Gastrocnemius medialis (tissue), 4 donors: ENCODE measurements at regions of chr10 and their contacts with region 1.

Region 1: DNA sequence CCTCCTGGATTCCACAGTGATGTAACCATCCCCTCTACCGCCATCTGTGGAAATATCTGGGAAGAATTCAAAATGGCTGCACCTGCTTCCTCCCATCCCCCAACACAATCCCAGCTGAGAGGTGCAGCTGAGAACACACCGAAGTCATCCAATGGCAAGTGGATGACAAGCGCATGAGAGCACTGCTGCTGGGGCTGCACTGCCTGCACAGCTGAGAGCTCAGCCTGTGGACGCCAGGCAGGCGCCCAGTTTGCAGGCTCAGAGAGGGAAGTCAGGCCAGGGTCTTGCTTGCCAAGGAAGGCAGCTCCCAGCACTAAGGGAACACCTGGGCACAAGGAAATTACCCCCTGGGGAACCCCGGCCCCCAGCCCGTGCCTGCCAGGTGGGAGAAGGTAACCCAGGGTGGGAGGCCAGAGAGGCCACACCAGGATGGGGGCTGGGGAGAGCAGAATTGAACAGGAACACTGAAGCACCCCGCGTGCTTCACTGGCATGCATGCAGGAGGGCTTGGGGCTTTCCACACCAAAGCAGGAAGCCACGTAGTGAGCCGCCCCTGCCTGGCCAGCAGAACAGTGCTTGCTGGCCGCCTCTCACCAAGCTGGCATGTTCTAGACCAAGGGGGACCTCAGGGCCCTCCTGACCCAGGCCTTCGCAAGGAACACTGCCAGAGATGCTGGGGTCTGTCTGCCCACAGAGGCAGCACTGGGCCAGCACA is 46.2 kb downstream of the FAM53B start:
- DNase-seq: no peak
- ATAC-seq: peak in 1 of 2 donors; percentile 10
- H3K4me3 ChIP-seq: no peak overlapping the region
- H3K27ac ChIP-seq: peak overlapping the region; percentile 93 to 98 (median 96)
- H3K4me1 ChIP-seq: peaks cover 79 to 97% of the 10 kb centered on the region in 2 donors
- H3K27me3 ChIP-seq: no peaks in the 10 kb centered on the region
- CTCF ChIP-seq: no peak
- POLR2A ChIP-seq: peak in 1 of 2 donors; percentile 26

Region 2: DNA sequence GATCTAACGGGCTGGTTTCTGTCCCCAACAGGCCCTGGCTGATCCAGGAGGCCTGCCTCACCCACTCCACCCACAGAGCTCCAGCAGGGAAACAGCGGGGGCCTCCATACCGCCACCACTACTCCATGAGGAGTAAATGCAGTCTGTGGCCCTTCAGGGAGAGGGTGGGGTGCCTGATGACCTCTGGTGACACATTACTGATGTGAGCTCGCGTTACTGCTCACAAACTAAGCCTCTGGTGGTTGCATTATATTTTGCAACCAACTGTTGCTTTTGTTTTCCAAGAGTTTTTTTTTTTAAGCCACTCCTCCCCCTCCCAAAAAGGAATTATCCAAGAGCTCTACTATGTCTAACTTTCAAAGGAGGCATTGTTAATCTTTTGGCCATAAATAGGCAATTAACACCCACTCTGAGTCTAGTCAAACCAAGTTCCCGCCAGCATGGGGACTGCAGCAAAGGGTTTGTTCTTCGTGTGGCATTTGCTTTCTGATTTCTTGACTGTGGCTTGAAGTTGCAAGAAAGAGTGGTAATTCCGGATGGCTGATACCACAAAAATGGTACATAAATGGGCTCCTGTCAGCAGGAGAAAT is 26.4 kb before region 1 on chr10:
- in situ Hi-C with region 1: no loop called
- intact Hi-C with region 1: no loop called
- DNase-seq: peak in 1 of 2 donors; percentile 87
- ATAC-seq: peak; percentile 42 to 76
- H3K4me3 ChIP-seq: no peak overlapping the region
- H3K27ac ChIP-seq: peak overlapping the region; percentile 55 to 97 (median 74)
- H3K4me1 ChIP-seq: peaks cover 90 to 91% of the 10 kb centered on the region in 2 donors
- H3K27me3 ChIP-seq: no peaks in the 10 kb centered on the region
- CTCF ChIP-seq: peak in 3 of 5 experiments; percentile 32 to 63 (median 51)
- POLR2A ChIP-seq: peak in 1 of 2 donors; percentile 13

Region 3: DNA sequence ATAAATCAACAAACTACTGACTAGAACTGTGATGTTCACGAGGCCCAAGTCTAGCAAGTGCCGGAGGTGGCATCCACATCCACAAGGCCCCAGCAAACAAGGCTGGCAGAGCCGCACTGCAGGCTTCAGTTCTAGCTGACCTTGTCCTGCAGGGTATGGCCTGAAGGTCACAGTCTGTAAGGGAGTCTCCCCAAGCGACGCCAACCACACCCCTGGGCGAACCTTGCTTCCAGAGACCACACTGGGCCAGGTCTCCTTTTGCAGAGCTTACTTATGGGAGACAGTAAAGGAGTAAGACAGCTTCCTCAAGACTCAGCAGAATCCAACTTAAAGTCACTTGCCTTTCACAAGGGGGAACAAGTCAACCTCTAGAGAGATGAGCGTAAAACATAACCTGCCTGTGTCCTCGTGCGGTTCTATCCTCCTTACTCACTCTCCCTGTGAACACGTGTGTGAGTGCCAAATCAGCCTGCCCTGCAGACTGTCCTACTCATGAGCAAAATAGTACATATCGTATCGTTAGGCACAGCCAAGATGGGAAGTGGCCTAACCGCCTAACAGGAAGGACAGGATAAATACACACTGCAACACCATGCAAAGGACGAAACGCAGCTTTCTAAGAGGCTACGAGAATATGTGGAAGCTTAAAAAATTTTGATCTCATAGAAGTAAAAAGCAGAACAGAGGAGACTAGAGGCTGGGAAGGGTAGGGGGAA is 23.5 kb after region 1 on chr10:
- in situ Hi-C with region 1: no loop called
- intact Hi-C with region 1: loop called (anchors 2 kb)
- DNase-seq: peak; percentile 93 to 94
- ATAC-seq: peak; percentile 85 to 87
- H3K4me3 ChIP-seq: no peak overlapping the region
- H3K27ac ChIP-seq: peak overlapping the region; percentile 92 to 97 (median 92)
- H3K4me1 ChIP-seq: peaks cover 97% of the 10 kb centered on the region in 2 donors
- H3K27me3 ChIP-seq: no peaks in the 10 kb centered on the region
- CTCF ChIP-seq: no peak
- POLR2A ChIP-seq: peak; percentile 64 to 75

Region 4: DNA sequence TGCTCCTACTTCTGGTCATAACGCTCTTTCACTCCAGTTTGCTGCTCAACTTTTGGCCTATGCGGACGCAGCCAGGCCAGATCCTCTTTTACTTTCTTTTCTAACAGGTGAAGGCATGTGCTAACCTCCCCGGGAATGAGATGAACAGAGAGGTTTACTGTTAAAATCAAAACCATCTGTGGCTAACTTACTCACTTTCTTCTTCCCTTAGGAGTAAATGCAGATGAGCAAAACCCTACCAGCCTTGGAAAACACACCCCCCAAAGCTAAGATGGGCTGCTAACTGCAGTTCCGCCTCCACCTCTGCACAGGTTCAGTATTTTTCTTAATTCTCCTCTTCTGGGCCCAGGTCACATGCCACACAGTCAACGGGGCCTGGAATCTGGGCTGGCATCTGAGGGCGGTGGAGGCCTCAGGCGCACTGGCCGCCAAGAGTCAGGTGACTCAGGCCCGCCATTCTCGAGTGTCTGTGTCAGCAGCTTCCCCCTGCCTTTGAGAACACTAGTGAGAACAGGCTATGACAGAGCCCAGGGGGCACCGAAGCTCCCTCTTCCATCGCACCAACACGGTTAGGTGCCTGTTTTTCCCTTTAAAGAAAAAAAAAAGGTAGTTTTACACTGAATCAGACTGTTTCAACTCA is 35.1 kb after region 1 on chr10:
- in situ Hi-C with region 1: no loop called
- intact Hi-C with region 1: loop called (anchors 2 kb)
- DNase-seq: peak; percentile 84 to 88
- ATAC-seq: peak; percentile 55 to 59
- H3K4me3 ChIP-seq: peak overlapping the region; percentile 6 to 36 (median 18)
- H3K27ac ChIP-seq: peak overlapping the region; percentile 92 to 97 (median 92)
- H3K4me1 ChIP-seq: peaks cover 100% of the 10 kb centered on the region in 2 donors
- H3K27me3 ChIP-seq: no peaks in the 10 kb centered on the region
- CTCF ChIP-seq: no peak
- POLR2A ChIP-seq: peak; percentile 58 to 83

Region 5: GRCh38 chr10:124743971-124744685 is 46.1 kb after region 1 on chr10 and contains the start of gene FAM53B:
- in situ Hi-C with region 1: no loop called
- intact Hi-C with region 1: no loop called
- DNase-seq: peak; percentile 69 to 80
- ATAC-seq: peak; percentile 29 to 49
- H3K4me3 ChIP-seq: peak within 1 kb of the TSS; percentile 69 to 88 (median 78)
- H3K27ac ChIP-seq: peak within 1 kb of the TSS; percentile 92 to 97 (median 92)
- H3K4me1 ChIP-seq: peaks cover 49 to 55% of the 10 kb centered on the region in 2 donors
- H3K27me3 ChIP-seq: no peaks in the 10 kb centered on the region
- CTCF ChIP-seq: peak in 4 of 5 experiments; percentile 23 to 67 (median 50)
- POLR2A ChIP-seq: peak; percentile 68 to 88
- total RNA-seq, gene FAM53B: 140 to 253 (median 192) TPM

Region 6: DNA sequence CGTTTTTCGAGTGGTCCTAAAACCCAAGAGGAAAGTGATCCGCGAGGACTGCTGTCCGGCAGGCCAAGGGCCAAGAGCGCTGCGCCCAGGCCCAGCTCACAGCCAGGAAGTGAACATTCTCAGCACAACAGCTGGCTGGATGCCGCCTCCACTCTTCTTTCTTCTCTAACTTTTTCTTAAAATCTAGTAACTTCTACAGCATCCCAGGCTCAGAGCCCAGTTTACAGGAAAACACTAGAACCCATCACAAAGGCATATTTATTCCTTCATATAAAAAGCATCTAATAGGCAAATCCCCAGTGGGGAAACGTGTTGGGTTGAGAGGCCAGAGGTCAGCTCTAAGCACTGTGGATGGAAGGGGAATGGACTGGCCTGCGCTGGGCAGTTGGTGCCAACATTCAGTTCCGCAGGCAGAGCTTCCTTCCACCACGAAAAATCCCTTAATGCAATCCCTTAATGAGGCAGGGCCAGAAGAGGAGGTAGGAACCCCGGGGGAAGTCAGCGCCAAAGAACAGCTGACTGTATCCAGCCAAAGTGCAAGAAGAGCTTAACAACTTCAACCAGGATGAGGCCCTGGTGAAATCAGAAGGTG is 318.7 kb after region 1 on chr10:
- in situ Hi-C with region 1: no loop called
- intact Hi-C with region 1: loop called (anchors 5 kb)
- DNase-seq: peak; percentile 72 to 87
- ATAC-seq: peak; percentile 62 to 69
- H3K4me3 ChIP-seq: peak overlapping the region; percentile 13 to 33 (median 19)
- H3K27ac ChIP-seq: peak overlapping the region; percentile 90 to 93 (median 91)
- H3K4me1 ChIP-seq: peaks cover 95 to 100% of the 10 kb centered on the region in 2 donors
- H3K27me3 ChIP-seq: no peaks in the 10 kb centered on the region
- CTCF ChIP-seq: no peak
- POLR2A ChIP-seq: peak in 1 of 2 donors; percentile 32